Activated naive CD4-positive, alpha-beta T cell treated with anti-CD3 and anti-CD28 coated beads for 36 hours (primary cell): ENCODE measurements at regions of chr2 and their contacts with region 1.

Region 1: GRCh38 chr2:7517088-7517487 is 599.9 kb downstream of the RNF144A start:
- DNase-seq: peak; percentile 61
- H3K4me3 Mint-ChIP-seq: peak overlapping the region; percentile 31
- H3K27ac Mint-ChIP-seq: peak overlapping the region; percentile 77
- H3K4me1 Mint-ChIP-seq: peaks cover 37% of the 10 kb centered on the region
- H3K27me3 Mint-ChIP-seq: no peaks in the 10 kb centered on the region

Region 2: GRCh38 chr2:7450188-7450832 is 66.8 kb before region 1 on chr2:
- CTCF ChIA-PET with region 1: no interaction called
- intact Hi-C with region 1: loop called (anchors 5 kb)
- DNase-seq: peak; percentile 75
- H3K4me3 Mint-ChIP-seq: peak overlapping the region; percentile 41
- H3K27ac Mint-ChIP-seq: peak overlapping the region; percentile 88
- H3K4me1 Mint-ChIP-seq: peaks cover 66% of the 10 kb centered on the region
- H3K27me3 Mint-ChIP-seq: no peaks in the 10 kb centered on the region

Region 3: GRCh38 chr2:7467782-7468447 is 49.2 kb before region 1 on chr2:
- CTCF ChIA-PET with region 1: no interaction called
- intact Hi-C with region 1: loop called (anchors 1 kb)
- DNase-seq: peak; percentile 68
- H3K4me3 Mint-ChIP-seq: no peak overlapping the region
- H3K27ac Mint-ChIP-seq: peak overlapping the region; percentile 83
- H3K4me1 Mint-ChIP-seq: peaks cover 45% of the 10 kb centered on the region
- H3K27me3 Mint-ChIP-seq: no peaks in the 10 kb centered on the region

Region 4: GRCh38 chr2:7473135-7473771 is 43.8 kb before region 1 on chr2:
- CTCF ChIA-PET with region 1: no interaction called
- intact Hi-C with region 1: loop called (anchors 1 kb)
- DNase-seq: no peak
- H3K4me3 Mint-ChIP-seq: no peak overlapping the region
- H3K27ac Mint-ChIP-seq: peak overlapping the region; percentile 72
- H3K4me1 Mint-ChIP-seq: peaks cover 46% of the 10 kb centered on the region
- H3K27me3 Mint-ChIP-seq: no peaks in the 10 kb centered on the region

Region 5: DNA sequence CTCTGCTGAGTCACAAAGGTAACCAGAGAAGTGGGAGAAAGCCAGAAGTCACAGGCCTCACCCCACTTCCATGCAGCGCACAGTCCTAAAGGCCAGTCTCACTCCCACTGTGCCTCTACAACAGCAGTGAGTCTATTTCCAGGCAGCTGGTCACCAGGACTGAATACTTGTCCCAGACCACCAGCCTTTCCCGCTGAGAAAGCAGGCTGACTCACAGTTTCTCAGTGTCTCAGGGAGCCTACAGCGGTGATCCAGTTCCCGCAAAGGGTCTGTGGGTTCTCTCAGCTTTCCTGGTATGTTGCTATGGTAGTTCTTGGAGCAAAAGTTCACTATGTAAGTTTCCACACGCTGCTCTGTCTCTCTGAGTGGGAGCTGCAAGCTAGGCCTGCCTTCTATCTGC is 22.7 kb after region 1 on chr2:
- CTCF ChIA-PET with region 1: no interaction called
- intact Hi-C with region 1: no loop called
- DNase-seq: no peak
- H3K4me3 Mint-ChIP-seq: no peak overlapping the region
- H3K27ac Mint-ChIP-seq: peak overlapping the region; percentile 46
- H3K4me1 Mint-ChIP-seq: peaks cover 44% of the 10 kb centered on the region
- H3K27me3 Mint-ChIP-seq: no peaks in the 10 kb centered on the region

Region 6: GRCh38 chr2:7773362-7774360 is 256.6 kb after region 1 on chr2:
- CTCF ChIA-PET with region 1: no interaction called
- intact Hi-C with region 1: no loop called
- DNase-seq: peak; percentile 59
- H3K4me3 Mint-ChIP-seq: no peak overlapping the region
- H3K27ac Mint-ChIP-seq: no peak overlapping the region
- H3K4me1 Mint-ChIP-seq: peaks cover 20% of the 10 kb centered on the region
- H3K27me3 Mint-ChIP-seq: no peaks in the 10 kb centered on the region